ENCODE measurements at regions of chr3 and their contacts with region 1.

Region 1: GRCh38 chr3:13002398-13003124 is 70.7 kb downstream of the IQSEC1 start:
- DNase-seq: no peak
- H3K4me3 ChIP-seq: no peak overlapping the region
- H3K27ac ChIP-seq: no peak overlapping the region
- H3K4me1 ChIP-seq: peaks cover 0 to 2% (median 0%) of the 10 kb centered on the region in 4 experiments; a peak in 2 of 7 replicates
- H3K27me3 ChIP-seq: 0 out of 7 replicates have a peak, but pooled peaks cover 0 to 3% (median 0%) of the 10 kb centered on the region in 4 experiments
- CTCF ChIP-seq: no peak
- EP300 ChIP-seq: no peak
- POLR2A ChIP-seq: no peak
- RAD21 ChIP-seq: no peak

Region 2: DNA sequence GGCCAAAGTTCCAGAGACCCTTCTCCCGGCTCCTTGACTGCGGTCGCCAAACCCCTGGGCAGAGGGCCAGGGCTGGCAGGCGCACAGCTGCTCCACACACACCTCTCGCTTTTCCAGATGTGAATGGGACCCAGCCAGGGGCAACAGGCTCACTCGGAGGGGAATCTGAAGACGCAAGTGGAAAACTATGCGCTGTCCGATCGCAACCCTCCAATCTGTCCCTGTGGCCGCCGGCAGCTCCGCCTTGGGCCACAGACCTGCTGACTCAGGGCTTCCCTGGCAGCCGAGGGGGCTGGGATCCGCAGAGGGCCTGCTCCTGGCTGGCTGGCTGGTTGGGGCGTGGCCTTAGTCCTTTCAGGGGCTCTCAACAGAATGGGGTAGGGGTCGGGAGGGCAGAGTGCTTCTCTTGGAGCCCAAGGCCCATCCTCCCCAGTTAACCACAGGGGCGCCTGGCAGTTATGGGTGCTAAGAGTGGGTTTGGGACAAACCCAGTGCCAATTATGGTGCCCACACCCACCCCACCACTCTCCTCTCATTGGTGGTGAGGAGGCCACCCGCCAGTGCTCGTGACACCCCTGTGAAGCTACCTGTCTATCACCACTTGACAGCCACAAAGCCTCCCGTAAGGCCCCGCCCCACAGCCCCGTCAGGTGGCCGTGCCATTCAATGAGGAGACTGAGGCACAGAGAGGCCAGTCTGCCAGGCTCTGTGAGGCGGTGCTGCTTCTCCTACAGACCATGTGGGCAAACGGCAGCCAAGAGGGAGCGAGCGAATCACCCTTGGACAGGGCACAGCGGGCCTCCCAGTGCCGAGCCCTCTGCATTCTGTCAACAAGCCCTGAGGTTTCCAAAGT is 16.9 kb after region 1 on chr3:
- CTCF ChIA-PET with region 1: interaction called, 71 read pairs
- POLR2A ChIA-PET with region 1: interaction called, 5 read pairs
- DNase-seq: peak; percentile 54 to 88
- H3K4me3 ChIP-seq: peak overlapping the region; percentile 11 to 54 (median 32); a peak in 7 of 8 replicates
- H3K27ac ChIP-seq: no peak overlapping the region
- H3K4me1 ChIP-seq: peaks cover 8 to 46% (median 37%) of the 10 kb centered on the region in 4 experiments
- H3K27me3 ChIP-seq: peaks cover 0 to 4% (median 0%) of the 10 kb centered on the region in 4 experiments; a peak in 3 of 7 replicates
- CTCF ChIP-seq: no peak; a peak in 1 of 4 replicates
- EP300 ChIP-seq: no peak
- POLR2A ChIP-seq: peak in 1 of 2 experiments; percentile 22; a peak in 1 of 3 replicates
- RAD21 ChIP-seq: no peak

Region 3: DNA sequence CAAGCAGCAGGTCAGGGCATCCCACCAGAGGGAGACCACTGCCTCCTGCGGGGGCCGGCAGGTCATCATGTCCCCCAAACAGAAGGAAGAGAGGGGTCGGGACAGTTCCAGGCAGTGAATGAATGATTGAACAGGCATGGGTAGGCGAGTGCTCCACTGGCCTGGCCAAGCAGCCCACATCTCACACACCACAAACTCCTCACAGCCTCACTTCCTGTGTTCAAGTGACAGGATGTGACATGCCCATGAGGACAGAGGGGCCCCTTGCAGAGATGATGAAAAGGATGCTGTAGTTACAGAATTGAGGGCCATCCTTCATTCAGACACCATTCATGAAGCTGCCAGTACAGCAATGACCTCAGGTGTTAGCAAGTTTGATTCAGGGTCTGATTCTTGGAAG is 66.9 kb after region 1 on chr3:
- CTCF ChIA-PET with region 1: no interaction called
- POLR2A ChIA-PET with region 1: no interaction called
- DNase-seq: no peak
- H3K4me3 ChIP-seq: no peak overlapping the region
- H3K27ac ChIP-seq: no peak overlapping the region
- H3K4me1 ChIP-seq: peaks cover 0 to 13% (median 4%) of the 10 kb centered on the region in 4 experiments; a peak in 5 of 7 replicates
- H3K27me3 ChIP-seq: peaks cover 6 to 24% (median 20%) of the 10 kb centered on the region in 4 experiments
- CTCF ChIP-seq: no peak
- EP300 ChIP-seq: no peak
- POLR2A ChIP-seq: no peak
- RAD21 ChIP-seq: no peak